Ovary (tissue), 10 donors: ENCODE measurements at regions of chr12 and their contacts with region 1.

Region 1: DNA sequence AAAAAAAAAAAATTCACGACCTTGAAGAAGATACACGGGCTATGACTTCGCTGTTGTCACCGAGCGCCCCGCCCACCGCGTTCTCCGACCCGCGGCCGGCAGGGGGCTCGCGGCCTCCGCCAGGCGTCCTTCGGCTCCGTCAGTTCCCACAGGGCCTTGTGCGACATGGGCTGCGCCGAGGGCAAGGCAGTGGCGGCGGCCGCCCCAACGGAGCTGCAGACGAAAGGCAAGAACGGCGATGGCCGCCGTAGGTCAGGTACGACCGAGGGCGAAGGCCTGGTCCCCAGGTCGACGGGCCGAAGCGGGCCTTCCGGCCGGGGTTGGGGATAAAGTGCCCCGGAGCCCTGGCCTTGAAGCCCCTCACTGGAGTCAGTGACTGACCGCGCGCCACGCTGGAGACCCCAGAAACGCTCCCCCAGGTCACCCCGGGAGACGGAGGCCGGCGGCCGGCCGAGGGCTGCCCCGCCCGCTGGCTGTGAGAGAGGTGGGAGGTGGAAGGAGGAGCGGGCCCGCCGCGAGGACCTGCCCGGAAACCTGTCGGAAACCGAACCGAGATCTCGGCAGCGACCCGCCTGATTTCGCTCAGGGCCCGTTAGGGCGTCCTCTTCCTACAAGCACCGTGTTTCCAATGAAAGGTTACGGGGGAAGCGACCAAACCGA is at the start of gene TXNRD1:
- DNase-seq: peak; percentile 83 to 88 (median 85)
- H3K4me3 ChIP-seq: peak within 1 kb of the TSS; percentile 69
- H3K27ac ChIP-seq: peak within 1 kb of the TSS; percentile 80 to 93
- H3K4me1 ChIP-seq: peaks cover 7% of the 10 kb centered on the region
- H3K27me3 ChIP-seq: no peaks in the 10 kb centered on the region
- CTCF ChIP-seq: peak; percentile 65 to 94 (median 93)
- EP300 ChIP-seq: no peak
- POLR2A ChIP-seq: peak; percentile 68
- total RNA-seq, gene TXNRD1: 70.5 to 157 (median 77.4) TPM

Region 2: DNA sequence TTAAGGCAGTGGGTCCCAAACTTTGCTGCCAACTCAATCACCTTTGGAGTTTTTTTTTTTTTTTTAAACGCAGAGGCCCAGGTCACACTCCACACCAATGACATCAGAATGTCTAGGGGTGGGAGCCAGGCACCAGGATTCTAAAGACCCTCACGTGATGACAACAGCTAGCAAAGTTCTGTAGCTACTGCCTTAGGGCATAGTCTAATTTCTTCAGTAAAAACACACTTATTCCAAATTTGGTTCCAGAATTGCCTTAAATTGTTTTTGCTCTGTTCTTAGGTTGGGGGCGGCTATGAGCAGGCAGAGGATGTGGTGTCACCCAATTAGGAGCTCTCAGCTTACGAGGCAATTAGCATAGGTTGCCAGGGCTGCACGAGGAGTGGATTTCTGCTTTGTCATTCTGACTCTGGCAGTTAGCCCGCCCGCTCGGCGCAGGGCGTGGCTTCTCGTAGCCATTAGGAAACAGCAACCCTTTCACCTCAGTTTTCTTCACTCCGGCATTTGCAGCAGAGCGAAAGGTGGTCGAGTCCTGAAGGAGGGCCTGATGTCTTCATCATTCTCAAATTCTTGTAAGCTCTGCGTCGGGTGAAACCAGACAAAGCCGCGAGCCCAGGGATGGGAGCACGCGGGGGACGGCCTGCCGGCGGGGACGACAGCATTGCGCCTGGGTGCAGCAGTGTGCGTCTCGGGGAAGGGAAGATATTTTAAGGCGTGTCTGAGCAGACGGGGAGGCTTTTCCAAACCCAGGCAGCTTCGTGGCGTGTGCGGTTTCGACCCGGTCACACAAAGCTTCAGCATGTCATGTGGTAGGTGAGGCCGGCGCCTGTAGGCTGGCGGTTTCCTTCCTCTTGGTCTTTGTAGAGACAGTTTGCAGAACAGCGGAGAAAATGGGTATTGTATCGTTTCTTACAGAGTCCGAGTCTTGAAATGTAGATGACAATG is 71.0 kb after region 1 on chr12:
- intact Hi-C with region 1: loop called in 3 of 4 experiments (anchors 5 kb)
- DNase-seq: peak; percentile 92 to 95 (median 93)
- H3K4me3 ChIP-seq: peak overlapping the region; percentile 73
- H3K27ac ChIP-seq: peak overlapping the region; percentile 78 to 81
- H3K4me1 ChIP-seq: peaks cover 9% of the 10 kb centered on the region
- H3K27me3 ChIP-seq: no peaks in the 10 kb centered on the region
- CTCF ChIP-seq: no peak
- EP300 ChIP-seq: peak; percentile 64
- POLR2A ChIP-seq: peak; percentile 85

Region 3: DNA sequence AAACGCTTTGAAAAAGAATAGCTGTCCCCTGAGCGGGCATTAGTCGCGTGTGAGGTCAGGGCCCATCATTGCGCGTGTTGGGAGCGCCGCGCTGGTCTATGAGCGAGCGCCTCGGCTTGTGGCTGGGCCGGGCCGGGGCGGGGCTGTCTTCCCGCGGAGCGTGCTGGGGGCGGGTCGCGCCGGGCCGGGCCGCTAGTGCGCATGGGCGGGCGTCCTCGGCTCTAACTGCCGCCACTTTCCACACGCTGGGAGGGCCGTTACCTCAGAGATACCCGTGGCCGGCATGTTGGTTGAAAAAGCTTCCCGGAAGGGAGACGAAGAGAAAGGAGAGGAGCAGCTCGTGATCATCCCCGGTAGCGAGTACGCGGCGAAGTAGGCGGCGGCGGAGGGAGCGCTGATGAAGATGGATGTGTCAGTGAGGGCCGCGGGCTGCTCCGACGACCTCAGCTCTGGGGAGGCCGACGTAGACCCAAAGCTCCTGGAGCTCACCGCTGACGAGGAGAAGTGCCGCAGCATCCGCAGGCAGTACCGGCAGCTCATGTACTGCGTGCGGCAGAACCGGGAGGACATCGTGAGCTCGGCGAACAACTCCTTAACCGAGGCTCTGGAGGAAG is 87.9 kb after region 1 on chr12 and contains the start of gene EID3:
- intact Hi-C with region 1: loop called in 1 of 4 experiments (anchors 5 kb)
- DNase-seq: peak; percentile 89 to 94 (median 91)
- H3K4me3 ChIP-seq: peak within 1 kb of the TSS; percentile 47
- H3K27ac ChIP-seq: peak within 1 kb of the TSS; percentile 46 to 75
- H3K4me1 ChIP-seq: peaks cover 8% of the 10 kb centered on the region
- H3K27me3 ChIP-seq: no peaks in the 10 kb centered on the region
- CTCF ChIP-seq: no peak
- EP300 ChIP-seq: no peak
- POLR2A ChIP-seq: no peak
- total RNA-seq, gene EID3: 5.2 to 23.4 (median 7.3) TPM

Region 4: GRCh38 chr12:104314242-104314614 is 98.5 kb after region 1 on chr12:
- intact Hi-C with region 1: no loop called
- DNase-seq: no peak
- H3K4me3 ChIP-seq: no peak overlapping the region
- H3K27ac ChIP-seq: no peak overlapping the region
- H3K4me1 ChIP-seq: peaks cover 7% of the 10 kb centered on the region
- H3K27me3 ChIP-seq: no peaks in the 10 kb centered on the region
- CTCF ChIP-seq: no peak
- EP300 ChIP-seq: no peak
- POLR2A ChIP-seq: no peak

Region 5: DNA sequence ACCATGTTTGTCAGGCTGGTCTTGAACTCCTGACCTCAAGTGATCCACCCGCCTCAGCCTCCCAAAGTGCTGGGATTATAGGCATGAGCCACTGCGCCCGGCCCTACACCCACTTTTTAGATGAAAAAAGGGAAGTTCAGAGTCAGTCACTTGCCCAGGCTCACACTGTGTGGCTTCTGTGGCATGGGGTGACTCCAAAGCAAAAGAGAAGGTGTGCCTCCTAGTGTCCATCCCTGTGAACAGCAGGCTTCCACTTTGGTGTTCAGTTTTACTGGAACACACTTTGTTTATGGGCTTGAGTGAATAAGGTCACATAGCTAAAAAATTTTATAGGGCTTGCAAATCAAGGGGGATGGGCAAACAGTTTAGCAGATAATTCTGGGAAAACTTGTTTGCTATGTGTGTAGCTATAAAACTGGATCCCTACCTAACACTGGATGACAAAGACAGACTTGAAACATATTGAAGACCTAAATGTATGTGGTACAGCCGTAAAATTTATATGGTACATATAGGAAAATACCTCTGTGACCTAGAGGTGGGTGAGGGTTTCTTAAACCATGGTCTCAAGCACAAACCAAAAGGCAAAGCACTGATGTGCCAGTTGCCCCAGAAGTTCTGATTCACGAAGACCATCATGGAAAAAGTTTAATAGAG is 142.7 kb after region 1 on chr12:
- intact Hi-C with region 1: loop called in 1 of 4 experiments (anchors 2 kb)
- DNase-seq: peak; percentile 41 to 63 (median 43)
- H3K4me3 ChIP-seq: no peak overlapping the region
- H3K27ac ChIP-seq: no peak overlapping the region
- H3K4me1 ChIP-seq: peaks cover 2% of the 10 kb centered on the region
- H3K27me3 ChIP-seq: no peaks in the 10 kb centered on the region
- CTCF ChIP-seq: peak in 2 of 3 donors; percentile 57 to 73
- EP300 ChIP-seq: no peak
- POLR2A ChIP-seq: no peak

Region 6: GRCh38 chr12:104399740-104400612 is 184.2 kb after region 1 on chr12:
- intact Hi-C with region 1: no loop called
- DNase-seq: no peak
- H3K4me3 ChIP-seq: no peak overlapping the region
- H3K27ac ChIP-seq: no peak overlapping the region
- H3K4me1 ChIP-seq: no peaks in the 10 kb centered on the region
- H3K27me3 ChIP-seq: no peaks in the 10 kb centered on the region
- CTCF ChIP-seq: no peak
- EP300 ChIP-seq: no peak
- POLR2A ChIP-seq: no peak